ENCODE measurements at regions of chr17 and their contacts with region 1.

Region 1: DNA sequence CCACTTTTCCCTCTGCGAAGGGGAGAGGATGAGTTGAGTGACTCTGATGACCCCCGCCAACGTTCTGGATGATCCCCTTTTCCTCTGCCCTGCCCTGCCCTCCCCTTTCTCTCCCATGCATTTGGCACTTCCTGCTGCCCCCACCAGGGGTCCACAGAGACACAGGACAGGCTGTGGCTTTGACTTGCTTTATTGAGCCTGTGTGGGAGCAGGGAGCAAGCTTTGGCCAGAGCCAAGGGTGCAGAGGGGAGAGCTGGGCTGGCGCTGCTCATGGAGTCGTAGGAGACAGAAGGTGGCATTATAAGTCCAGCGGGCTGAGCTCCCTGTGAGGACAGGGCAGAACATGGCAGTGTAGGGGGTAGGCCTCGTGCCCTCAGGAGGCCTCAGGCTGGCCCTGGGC is 1.6 kb downstream of the PPY start:
- DNase-seq: no peak
- H3K4me3 ChIP-seq: no peak overlapping the region
- H3K27ac ChIP-seq: no peak overlapping the region
- H3K4me1 ChIP-seq: no peaks in the 10 kb centered on the region
- H3K27me3 ChIP-seq: no peaks in the 10 kb centered on the region
- CTCF ChIP-seq: peak in 1 of 3 experiments; percentile 24

Region 2: DNA sequence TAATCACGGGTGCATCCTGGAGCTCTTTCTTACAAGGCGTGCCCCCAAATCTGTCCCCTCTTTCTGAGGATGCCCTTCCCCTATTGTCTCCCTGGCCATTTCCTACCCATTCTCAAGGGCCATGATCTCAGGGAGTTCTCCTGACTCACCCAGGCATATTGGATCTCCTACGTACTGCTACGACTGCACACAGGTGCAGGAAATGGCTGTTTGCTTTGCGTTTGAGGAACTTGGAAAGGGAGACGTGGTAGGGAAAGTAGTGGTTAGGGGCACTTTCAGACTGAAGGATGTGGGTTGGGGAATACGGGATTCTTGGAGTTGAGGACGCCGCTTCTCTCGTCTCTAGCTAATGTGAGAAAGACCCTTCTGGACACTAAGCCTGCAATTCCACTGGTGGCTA is 260.2 kb before region 1 on chr17:
- intact Hi-C with region 1: no loop called
- DNase-seq: no peak
- H3K4me3 ChIP-seq: no peak overlapping the region
- H3K27ac ChIP-seq: no peak overlapping the region
- H3K4me1 ChIP-seq: peaks cover 0 to 7% of the 10 kb centered on the region in 2 donors
- H3K27me3 ChIP-seq: no peaks in the 10 kb centered on the region
- CTCF ChIP-seq: no peak

Region 3: DNA sequence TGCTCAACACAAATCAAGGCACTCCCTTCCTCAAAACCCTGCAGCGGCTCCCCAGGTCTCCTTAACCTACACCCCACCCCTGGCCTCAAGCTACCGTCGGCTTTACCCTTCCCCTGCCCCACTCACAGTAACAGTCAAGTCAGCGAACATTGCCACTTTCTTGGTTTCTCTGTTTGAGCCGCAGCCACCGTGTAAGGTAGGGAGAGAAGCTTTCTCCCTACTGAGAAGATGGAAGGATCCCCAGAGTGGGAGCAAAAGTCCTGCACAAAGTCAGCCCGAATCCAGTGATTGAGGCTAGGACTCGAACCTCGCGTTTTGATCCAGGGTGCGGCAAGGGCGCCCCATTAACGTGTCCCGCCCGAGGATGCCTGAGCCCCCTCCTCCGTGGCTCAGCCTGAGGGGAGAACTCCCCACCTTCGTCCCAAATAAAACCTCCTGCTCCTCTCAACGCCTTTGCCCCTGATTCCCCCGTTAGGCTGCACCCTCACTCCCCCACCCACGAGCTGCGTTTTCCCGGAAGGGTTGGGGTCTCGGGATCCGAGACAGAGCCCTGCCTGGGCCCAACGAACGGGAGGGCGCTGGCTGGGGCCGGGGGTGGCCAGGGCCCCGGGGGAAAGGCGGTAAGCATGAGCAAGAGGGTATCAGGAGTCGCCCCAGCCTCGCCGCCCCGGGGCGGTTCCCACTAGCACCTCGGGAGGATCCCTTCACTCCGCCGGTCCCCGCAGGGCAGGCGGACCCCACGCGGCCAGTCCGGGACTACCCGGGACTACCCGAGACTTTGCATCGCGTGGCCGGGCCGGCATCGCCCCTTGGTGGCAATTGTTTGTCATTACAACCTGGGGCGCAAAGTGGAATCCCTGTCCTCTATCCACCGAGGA is 53.9 kb after region 1 on chr17:
- intact Hi-C with region 1: loop called (anchors 2 kb)
- DNase-seq: peak in 1 of 2 donors; percentile 77
- H3K4me3 ChIP-seq: peak overlapping the region; percentile 34 to 53
- H3K27ac ChIP-seq: no peak overlapping the region
- H3K4me1 ChIP-seq: peaks cover 4 to 8% of the 10 kb centered on the region in 2 donors
- H3K27me3 ChIP-seq: no peaks in the 10 kb centered on the region
- CTCF ChIP-seq: peak; percentile 74 to 87 (median 78)

Region 4: DNA sequence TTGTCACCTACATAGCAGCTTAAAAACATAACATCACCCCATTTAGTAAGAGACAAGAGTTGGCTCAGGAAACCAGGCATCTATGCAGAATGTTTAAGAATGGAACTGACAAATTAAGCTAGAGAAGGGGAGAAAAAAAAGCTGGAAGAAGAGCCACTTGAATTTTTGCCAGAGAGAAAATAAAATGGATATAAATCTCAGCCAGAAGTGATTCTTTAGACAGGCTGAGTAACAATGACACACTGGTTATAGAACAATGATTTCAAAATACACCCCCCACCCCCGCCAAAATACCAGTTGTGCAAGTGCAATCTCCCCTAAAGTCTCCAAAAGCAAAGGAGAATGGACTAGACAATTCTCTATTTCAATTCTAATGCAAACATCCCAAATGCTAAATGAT is 103.4 kb after region 1 on chr17:
- intact Hi-C with region 1: loop called (anchors 1 kb)
- DNase-seq: no peak
- H3K4me3 ChIP-seq: no peak overlapping the region
- H3K27ac ChIP-seq: no peak overlapping the region
- H3K4me1 ChIP-seq: peaks cover 7 to 14% of the 10 kb centered on the region in 2 donors
- H3K27me3 ChIP-seq: no peaks in the 10 kb centered on the region
- CTCF ChIP-seq: no peak

Region 5: DNA sequence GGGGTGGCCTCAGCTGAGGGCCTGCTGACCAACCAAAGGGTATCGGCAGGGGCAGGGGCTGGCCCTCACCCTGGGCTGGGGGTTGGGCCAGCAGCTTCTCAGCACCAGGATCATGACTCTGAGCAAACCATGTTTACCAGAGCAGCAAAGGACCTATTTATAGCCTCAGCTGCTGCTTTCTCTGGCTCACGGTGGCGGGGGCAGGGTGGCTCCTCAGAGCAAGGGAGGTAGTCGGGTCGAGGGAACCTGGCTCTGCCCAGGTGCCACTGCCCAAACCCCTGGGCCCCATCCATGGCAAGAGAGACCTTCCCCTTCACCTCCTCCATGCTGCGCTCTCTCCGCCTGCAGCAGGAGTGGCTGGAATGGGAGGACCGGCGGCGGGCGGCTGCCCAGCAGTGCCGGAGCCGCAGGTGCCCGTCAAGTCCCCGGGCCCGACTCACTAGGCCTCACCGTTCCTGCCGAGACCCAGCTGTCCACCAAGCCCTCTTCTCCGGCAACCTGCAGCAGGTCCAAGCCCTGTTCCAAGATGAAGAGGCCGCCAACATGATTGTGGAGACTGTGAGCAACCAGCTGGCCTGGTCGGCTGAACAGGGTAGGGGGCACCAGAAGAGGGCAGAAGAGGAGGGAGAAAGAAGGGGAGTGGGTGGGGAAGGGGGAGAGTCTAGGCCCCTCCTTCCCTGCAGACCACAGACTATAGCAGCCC is 230.0 kb after region 1 on chr17 and contains the start of gene ASB16:
- intact Hi-C with region 1: loop called (anchors 2 kb)
- DNase-seq: no peak
- H3K4me3 ChIP-seq: peak within 1 kb of the TSS; percentile 42 to 62
- H3K27ac ChIP-seq: peak within 1 kb of the TSS; percentile 59 to 87
- H3K4me1 ChIP-seq: peaks cover 4 to 15% of the 10 kb centered on the region in 2 donors
- H3K27me3 ChIP-seq: no peaks in the 10 kb centered on the region
- CTCF ChIP-seq: no peak
- total RNA-seq, gene ASB16: not detected

Measured in ascending aorta (tissue), 2 donors.